GM18951 (cell line): ENCODE measurements at regions of chr12 and their contacts with region 1.

Region 1: DNA sequence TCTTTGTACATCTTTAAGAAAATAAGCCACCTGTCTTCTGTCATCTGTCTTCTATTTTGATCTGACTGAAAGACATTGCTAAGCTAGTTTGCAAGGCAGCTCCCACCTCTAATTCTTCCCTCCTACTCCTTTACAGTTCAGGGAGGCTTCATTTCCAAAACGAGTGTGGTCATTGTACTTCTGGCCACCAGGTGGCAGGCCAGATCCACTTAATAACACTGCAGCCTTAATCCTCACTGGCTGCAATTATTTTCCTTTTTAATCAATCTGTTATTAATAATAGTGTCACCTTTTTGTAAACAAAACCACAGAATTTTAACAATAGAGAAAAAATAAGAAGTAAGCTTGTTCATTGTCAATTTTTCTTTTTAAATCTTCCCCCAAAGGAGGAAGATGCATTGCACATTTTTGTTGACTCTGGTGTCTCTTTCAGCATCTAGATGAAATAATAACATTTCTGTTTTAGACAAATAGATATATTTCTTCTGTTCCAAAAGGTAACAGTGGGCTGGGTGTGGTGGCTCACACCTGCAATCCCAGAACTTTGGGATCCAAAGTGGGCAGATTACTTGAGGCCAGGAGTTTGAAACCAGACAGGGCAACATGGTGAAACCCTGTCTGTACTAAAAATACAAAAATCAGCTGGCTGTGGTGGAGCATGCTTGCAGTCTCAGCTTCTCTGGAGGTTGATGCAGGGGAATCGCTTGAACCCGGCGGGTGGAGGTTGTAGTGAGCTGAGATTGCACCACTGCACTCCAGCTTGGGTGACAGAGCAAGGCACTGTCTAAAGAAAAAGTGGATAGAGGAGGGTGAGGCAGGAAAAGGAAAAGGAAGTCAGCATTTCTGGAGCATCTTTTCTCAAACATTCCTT is 23.3 kb downstream of the GABARAPL1 start:
- POLR2A ChIP-seq: no peak

Region 2: GRCh38 chr12:9961106-9961505 is 274.9 kb before region 1 on chr12:
- in situ Hi-C with region 1: no loop called
- POLR2A ChIP-seq: no peak

Region 3: DNA sequence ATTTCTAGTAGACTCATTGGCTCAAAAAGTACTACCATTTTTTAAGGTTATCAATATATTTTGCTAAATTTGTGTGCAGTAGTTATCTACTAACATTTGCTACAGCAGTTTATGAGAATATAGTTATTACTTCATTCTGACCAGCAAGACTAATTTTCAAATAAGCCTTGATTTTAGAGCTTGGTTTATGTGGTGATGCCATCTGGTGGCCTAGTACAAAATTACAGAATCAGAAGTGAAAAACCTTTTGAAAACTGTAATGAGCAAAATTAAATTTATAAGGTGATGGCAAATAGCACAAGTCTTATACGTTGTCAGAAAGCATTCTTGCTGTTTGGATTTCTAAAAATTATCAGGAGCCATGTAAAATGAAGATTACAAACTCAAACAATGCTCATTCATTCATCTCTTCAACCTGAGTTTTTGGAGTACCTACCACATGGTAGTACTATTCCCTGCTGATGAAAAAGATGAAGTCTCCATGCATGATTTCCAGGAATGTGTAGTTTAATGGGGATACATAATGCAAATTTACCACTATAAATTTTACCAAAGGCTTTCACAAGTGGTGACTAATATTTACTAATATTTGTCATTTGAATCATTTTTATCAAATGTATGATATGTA is 326.4 kb after region 1 on chr12:
- in situ Hi-C with region 1: loop called (anchors 10 kb)
- POLR2A ChIP-seq: no peak

Region 4: DNA sequence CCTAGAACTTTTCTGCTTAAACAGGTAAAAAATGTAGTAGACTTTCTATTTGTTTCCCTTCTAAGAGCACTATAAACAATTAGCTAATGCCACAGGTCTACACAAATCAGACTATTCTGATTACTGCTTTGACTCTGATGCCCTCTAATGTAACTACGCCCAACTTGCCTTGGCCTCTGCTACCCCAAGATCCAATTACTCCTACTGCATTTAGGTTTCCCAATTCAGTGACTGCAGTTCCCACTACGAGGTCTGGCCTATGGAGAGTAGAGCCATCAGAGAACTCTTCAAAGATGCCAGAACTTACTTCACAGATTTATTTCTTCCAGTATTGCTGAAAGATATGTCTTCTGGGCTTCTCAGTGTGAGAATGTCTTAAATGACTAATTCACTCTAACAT is 453.1 kb after region 1 on chr12:
- in situ Hi-C with region 1: loop called (anchors 10 kb)
- POLR2A ChIP-seq: no peak

Region 5: GRCh38 chr12:10749700-10750384 is 513.8 kb after region 1 on chr12:
- in situ Hi-C with region 1: loop called (anchors 25 kb)
- POLR2A ChIP-seq: no peak